Heart left ventricle (tissue), 16 donors: ENCODE measurements at regions of chr4 and their contacts with region 1.

Region 1: GRCh38 chr4:70885174-70885573 is 17.0 kb upstream of the MOB1B start:
- DNase-seq: no peak
- ATAC-seq: no peak
- H3K4me3 ChIP-seq: no peak overlapping the region
- H3K27ac ChIP-seq: no peak overlapping the region
- H3K4me1 ChIP-seq: no peaks in the 10 kb centered on the region
- H3K27me3 ChIP-seq: no peaks in the 10 kb centered on the region
- CTCF ChIP-seq: peak in 1 of 12 donors; percentile 15
- POLR2A ChIP-seq: no peak

Region 2: DNA sequence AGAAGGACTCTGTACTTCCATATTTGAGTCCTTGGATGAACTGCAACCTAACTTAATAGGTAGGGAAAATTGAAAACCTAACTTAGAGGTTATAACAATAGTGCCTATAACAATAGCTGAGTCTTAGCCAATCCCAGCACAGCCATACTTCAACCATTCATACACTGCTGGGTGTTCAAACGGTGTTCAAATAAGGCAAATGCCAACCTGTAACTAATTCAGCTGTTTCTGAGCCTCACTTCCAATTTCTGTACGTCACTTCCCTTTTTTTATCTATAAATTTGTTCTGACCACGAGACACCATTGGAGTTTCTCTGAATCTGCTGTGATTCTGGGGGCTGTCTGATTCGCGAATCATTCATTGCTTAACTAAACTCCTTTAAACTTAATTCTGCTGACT is 35.9 kb before region 1 on chr4:
- intact Hi-C with region 1: loop called in 3 of 10 experiments (anchors 5 to 10 kb)
- DNase-seq: no peak
- ATAC-seq: no peak
- H3K4me3 ChIP-seq: no peak overlapping the region
- H3K27ac ChIP-seq: no peak overlapping the region
- H3K4me1 ChIP-seq: no peaks in the 10 kb centered on the region
- H3K27me3 ChIP-seq: no peaks in the 10 kb centered on the region
- CTCF ChIP-seq: no peak
- POLR2A ChIP-seq: no peak